ENCODE measurements at regions of chr19 and their contacts with region 1.

Region 1: DNA sequence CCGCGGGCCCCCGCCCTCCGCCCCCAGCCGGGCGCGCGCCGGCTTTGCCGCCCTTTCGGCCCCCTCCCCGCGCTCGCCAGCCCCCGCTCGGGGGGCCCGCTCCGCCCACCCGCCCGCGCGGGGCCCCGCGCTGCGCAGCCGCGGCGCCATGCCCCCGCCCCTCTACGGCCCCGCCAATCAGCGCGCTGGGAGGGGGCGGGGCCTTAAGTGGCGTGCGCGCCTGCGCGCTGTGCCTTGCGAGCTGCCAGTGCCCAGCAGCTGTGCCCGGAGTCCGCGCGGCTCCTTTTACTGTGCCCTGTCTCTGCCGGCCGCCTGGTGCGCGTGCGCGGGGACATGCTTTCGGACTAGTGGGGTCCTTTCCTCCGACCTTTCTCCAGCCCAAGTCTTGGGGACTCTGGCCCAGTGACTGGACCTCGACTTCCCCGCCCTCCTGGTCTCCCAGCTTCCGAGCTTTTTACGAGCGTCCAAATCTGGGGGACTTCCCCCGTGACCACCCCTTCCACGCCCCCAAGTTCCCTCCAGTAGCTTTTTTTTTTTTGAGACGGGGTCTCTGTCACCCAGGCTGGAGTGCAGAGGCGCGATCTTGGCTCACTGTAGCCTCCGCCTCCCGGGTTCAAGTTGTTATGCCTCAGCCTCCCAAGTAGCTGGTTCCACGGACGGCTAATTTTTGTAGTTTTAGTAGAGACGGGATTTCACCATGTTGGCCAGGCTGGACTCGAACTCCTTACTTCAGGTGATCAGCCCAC is at the start of gene MBD3:
- DNase-seq: peak; percentile 89 to 96 (median 94)
- H3K4me3 ChIP-seq: peak within 1 kb of the TSS; percentile 61 to 94 (median 84)
- H3K27ac ChIP-seq: peak within 1 kb of the TSS; percentile 41 to 98 (median 93)
- H3K27me3 ChIP-seq: no peaks in the 10 kb centered on the region
- CTCF ChIP-seq: peak in 25 of 56 donors; percentile 7 to 44 (median 24)
- total RNA-seq, gene MBD3: 59.7 to 192 (median 85.4) TPM

Region 2: GRCh38 chr19:1325568-1326294 is 267.2 kb before region 1 on chr19:
- intact Hi-C with region 1: no loop called
- DNase-seq: no peak
- H3K4me3 ChIP-seq: peak overlapping the region; percentile 33 to 80 (median 65)
- H3K27ac ChIP-seq: peak overlapping the region in 32 of 59 donors; percentile 1 to 84 (median 43)
- H3K27me3 ChIP-seq: no peaks in the 10 kb centered on the region
- CTCF ChIP-seq: no peak

Region 3: DNA sequence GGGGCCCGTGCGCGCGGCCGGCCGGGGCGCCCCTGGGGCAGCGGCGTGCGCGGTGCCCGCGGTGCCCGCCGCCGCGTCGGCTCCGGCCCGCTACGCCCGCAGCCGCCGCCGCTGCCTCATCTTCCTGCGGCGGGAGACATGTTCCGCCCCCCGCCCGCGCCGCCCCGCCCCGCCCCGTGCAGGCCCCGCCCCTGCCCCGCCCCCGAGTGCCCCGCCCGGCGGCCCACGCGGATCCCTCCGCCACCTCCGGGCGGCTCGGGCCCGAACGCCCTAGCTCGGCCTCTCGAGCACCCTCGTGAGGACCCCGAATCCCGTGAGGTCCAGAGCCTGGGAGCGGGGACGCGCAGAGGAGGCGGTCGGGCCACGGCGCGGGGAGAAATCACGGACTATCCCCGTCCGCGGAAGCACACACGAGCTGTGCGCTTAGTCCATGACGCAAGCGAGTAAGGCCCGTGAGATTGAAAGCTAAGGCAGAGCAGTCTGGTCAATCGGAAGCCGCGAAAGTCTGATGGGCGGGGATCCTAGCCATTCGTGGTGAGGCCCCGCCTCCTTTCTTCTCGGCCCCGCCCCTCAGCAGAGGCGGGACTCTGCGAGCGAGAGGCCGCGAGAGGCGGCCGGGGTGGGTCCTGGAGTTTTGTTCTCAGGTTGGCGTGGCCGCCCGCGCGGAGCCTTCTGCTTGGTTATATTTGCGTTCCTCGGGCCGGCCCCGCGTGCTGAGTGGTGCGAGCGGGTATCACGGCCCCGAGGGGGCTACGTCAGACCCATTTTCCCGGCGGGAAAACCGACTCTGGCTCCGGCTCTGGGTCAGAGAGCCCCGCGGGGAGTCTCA is 59.8 kb after region 1 on chr19 and contains the start of gene TCF3:
- intact Hi-C with region 1: loop called (anchors 5 kb)
- DNase-seq: peak; percentile 97 to 99 (median 99)
- H3K4me3 ChIP-seq: peak within 1 kb of the TSS; percentile 65 to 89 (median 78)
- H3K27ac ChIP-seq: peak within 1 kb of the TSS; percentile 96 to 100 (median 99)
- H3K27me3 ChIP-seq: no peaks in the 10 kb centered on the region
- CTCF ChIP-seq: peak in 18 of 56 donors; percentile 7 to 47 (median 22)
- total RNA-seq, gene TCF3: 15.2 to 51.5 (median 25.4) TPM

Region 4: DNA sequence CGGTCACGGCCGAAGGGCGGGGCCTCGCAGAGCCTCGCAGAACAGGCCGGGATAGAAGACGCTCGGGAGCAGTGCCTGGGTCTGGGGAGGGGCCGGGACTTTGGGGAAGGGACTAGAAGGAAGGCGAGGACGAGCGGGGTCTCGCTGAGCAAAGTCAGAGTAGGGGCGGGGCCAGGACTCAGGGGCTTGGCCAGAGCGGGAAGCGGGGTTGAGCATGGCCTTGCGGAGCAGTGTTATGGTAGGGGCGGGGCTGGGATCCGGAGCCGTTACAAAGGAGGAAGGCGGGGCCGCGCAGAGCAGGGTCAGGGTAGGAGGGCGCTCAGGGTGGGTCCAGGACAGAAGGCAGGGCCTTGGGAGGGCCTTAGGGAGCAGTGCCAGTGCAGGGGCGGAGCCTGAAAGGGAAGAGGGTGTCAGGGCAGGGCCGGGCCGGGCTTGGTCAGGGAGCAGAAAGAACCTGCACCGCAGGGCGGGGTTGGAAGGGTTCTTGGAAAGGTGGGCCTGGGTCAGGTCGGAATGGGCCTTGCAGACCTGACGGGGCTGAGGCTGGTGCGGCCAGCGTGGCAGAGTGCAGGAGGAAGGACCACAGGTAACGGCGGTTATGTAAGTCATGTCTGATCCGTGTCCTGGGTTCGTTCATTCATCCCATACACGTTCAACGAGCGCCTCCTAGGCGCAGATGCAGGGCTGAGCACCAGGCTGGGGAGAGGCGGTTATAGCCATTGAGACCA is 219.7 kb after region 1 on chr19:
- intact Hi-C with region 1: no loop called
- DNase-seq: peak; percentile 36 to 78 (median 66)
- H3K4me3 ChIP-seq: peak overlapping the region; percentile 44 to 79 (median 65)
- H3K27ac ChIP-seq: peak overlapping the region in 42 of 59 donors; percentile 10 to 91 (median 64)
- H3K27me3 ChIP-seq: no peaks in the 10 kb centered on the region
- CTCF ChIP-seq: peak in 55 of 56 donors; percentile 23 to 66 (median 54)

Measured in dorsolateral prefrontal cortex (tissue), 120 donors.